HepG2 (cell line): ENCODE measurements at regions of chr11 and their contacts with region 1.

Region 1: DNA sequence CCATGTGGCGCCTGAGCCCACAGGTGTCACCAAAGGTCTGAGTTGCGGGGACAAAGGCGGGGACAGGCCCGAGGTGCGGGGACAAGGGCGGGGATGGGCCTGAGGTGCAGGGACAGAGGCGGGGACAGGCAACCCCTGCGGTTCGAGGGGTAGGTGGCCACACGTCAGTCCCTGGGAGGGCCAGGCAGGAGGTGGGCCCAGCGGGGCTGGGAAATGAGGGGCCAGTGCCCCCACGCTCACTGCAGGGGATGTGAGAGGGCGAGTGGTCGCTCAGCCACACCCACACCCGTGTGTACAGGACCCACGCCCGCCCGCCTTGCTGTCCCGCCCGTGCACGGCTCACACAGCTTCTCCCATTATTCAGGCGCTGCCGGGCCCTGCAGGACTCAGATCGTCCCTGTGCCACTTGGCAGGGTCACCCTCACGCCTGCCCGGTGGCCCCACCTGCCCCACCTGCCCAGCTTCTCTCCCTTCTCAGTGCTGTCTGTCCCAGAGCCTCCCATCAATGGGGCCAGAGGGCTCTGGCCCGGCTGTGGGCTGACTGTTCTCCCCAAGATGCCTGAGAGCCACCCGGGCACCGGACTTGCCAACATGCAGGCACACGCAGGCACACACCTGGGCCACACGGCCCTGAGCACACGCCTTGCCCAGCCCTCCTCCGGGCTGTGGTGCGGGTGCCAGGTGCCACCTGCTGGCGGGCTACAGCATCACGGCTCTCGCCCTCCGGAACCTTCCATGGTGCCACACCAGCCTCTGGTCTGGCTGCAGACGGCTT is 14.2 kb upstream of the MUC6 start:
- DNase-seq: peak; percentile 53
- ATAC-seq: peak; percentile 94
- H3K4me3 ChIP-seq: no peak overlapping the region; a peak in 1 of 6 replicates
- H3K27ac ChIP-seq: no peak overlapping the region
- H3K4me1 ChIP-seq: no peaks in the 10 kb centered on the region
- H3K27me3 ChIP-seq: peaks cover 21 to 89% of the 10 kb centered on the region in 2 experiments
- CTCF ChIP-seq: peak; percentile 100
- EP300 ChIP-seq: no peak
- POLR2A ChIP-seq: no peak
- RAD21 ChIP-seq: peak; percentile 96

Region 2: GRCh38 chr11:888310-889212 is 162.2 kb before region 1 on chr11:
- CTCF ChIA-PET with region 1: no interaction called
- POLR2A ChIA-PET with region 1: no interaction called
- in situ Hi-C with region 1: loop called (anchors 10 kb)
- intact Hi-C with region 1: no loop called
- DNase-seq: no peak
- ATAC-seq: no peak
- H3K4me3 ChIP-seq: no peak overlapping the region
- H3K27ac ChIP-seq: no peak overlapping the region
- H3K4me1 ChIP-seq: no peaks in the 10 kb centered on the region
- H3K27me3 ChIP-seq: no peaks in the 10 kb centered on the region
- CTCF ChIP-seq: no peak
- EP300 ChIP-seq: no peak
- POLR2A ChIP-seq: no peak
- RAD21 ChIP-seq: no peak

Region 3: GRCh38 chr11:898143-898511 is 152.6 kb before region 1 on chr11:
- CTCF ChIA-PET with region 1: interaction called, 6 read pairs
- POLR2A ChIA-PET with region 1: no interaction called
- in situ Hi-C with region 1: no loop called
- intact Hi-C with region 1: loop called (anchors 1 kb)
- DNase-seq: peak; percentile 27
- ATAC-seq: peak; percentile 53
- H3K4me3 ChIP-seq: no peak overlapping the region
- H3K27ac ChIP-seq: no peak overlapping the region
- H3K4me1 ChIP-seq: no peaks in the 10 kb centered on the region
- H3K27me3 ChIP-seq: no peaks in the 10 kb centered on the region
- CTCF ChIP-seq: peak; percentile 43
- EP300 ChIP-seq: no peak
- POLR2A ChIP-seq: no peak
- RAD21 ChIP-seq: no peak